Motor neuron (in vitro differentiated cells): ENCODE measurements at regions of chr13 and their contacts with region 1.

Region 1: GRCh38 chr13:30905932-30906383 is at the start of gene MEDAG:
- ATAC-seq: peak; percentile 50 to 87 (median 80)
- H3K4me3 ChIP-seq: peak within 1 kb of the TSS in 2 of 5 donors; percentile 1 to 6
- H3K27ac ChIP-seq: no peak within 1 kb of the TSS
- H3K4me1 ChIP-seq: peaks cover 4 to 5% of the 10 kb centered on the region in 2 donors
- total RNA-seq, gene MEDAG: 0.14 to 6.8 (median 0.19) TPM in 3 of 8 experiments, not detected in the others

Region 2: DNA sequence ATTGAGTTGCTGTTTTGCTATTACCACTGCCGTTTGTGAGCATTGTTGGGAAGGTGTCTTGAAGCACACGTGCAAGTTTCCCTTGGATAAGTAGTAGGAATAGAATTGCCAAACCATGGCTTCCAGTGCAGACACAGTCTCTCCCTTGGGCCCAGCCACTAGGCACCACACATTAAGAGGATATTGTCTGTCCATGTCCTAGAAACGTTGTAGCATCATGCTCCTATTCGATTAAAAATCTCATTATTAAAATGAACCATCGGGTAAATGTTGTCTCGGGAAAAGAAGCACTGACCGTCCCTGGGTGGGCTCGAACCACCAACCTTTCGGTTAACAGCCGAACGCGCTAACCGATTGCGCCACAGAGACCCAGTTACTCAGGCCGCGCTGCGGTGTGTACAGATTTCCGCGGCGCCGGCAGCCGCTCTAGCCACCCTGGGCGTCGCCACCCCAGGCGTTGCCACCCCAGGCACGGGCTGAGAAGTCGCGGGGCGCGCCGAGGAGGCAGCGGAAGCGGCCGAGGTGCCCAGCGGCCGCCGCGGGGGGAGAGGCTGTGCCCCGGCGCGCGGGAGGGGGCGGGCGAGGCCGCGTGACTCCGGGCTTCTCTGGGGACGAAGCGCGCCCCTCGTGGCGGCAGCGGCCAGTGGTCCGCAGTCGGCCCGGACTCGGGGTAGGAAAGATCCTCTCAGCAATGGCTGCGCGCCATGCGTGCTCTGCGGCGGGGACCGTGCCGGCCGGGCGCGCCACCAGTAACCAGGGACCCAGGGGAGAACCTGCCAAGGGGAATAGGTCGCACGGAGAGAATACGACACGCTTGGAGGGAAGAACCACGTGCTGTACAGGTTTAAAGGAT is 232.1 kb before region 1 on chr13:
- in situ Hi-C with region 1: no loop called
- ATAC-seq: peak; percentile 87 to 92 (median 91)
- H3K4me3 ChIP-seq: peak overlapping the region; percentile 33 to 42 (median 39)
- H3K27ac ChIP-seq: peak overlapping the region; percentile 61 to 63
- H3K4me1 ChIP-seq: peaks cover 3 to 10% of the 10 kb centered on the region in 2 donors

Region 3: GRCh38 chr13:31012655-31013024 is 106.7 kb after region 1 on chr13:
- in situ Hi-C with region 1: loop called in 2 of 9 experiments (anchors 25 kb)
- ATAC-seq: peak in 5 of 8 experiments; percentile 29 to 49 (median 45)
- H3K4me3 ChIP-seq: no peak overlapping the region
- H3K27ac ChIP-seq: no peak overlapping the region
- H3K4me1 ChIP-seq: peaks cover 13 to 20% of the 10 kb centered on the region in 2 donors